A673 (cell line): ENCODE measurements at regions of chr12 and their contacts with region 1.

Region 1: DNA sequence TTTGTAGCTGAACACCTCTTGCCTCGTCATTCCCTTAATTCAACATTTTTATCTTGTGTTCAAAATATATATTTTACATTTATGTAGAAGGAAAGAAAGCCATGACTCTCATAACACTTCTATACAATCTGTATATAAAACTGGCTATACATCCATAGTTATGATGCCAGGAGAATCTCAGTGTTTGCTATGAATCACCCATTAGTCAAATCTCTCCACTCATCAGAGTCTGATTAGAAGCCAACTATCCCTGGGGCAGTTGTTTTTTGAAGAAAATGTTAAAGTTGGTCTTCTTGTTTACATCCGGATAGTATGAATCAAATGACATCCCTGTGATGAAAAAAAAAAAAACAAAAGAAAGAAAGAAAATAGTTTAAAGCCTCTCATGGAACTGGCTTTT is 503.9 kb downstream of the NELL2 start:
- DNase-seq: no peak
- H3K4me3 ChIP-seq: no peak overlapping the region
- H3K27ac ChIP-seq: no peak overlapping the region
- H3K4me1 ChIP-seq: peaks cover 4% of the 10 kb centered on the region
- H3K27me3 ChIP-seq: no peaks in the 10 kb centered on the region
- CTCF ChIP-seq: no peak

Region 2: DNA sequence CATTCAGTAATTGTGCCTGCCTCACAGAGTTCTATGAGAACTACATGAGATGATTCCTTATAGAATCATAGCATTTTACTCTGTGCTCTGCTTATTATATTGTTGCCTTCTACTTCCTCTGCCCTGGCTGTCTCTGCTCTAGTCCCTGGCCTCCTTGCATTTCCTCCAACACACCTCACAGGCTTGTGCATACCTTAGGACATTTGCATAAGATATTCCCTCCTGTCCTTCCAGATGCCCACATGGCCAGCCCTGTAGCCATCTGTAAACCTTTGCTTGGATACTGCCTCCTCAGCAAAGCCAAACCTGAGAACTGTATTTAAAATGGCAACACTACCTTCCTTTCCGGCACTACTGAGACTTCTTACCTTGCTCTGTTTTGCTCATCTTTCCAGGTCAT is 50.3 kb after region 1 on chr12:
- CTCF ChIA-PET with region 1: no interaction called
- POLR2A ChIA-PET with region 1: no interaction called
- intact Hi-C with region 1: loop called (anchors 5 kb)
- DNase-seq: no peak
- H3K4me3 ChIP-seq: no peak overlapping the region
- H3K27ac ChIP-seq: no peak overlapping the region
- H3K4me1 ChIP-seq: no peaks in the 10 kb centered on the region
- H3K27me3 ChIP-seq: no peaks in the 10 kb centered on the region
- CTCF ChIP-seq: no peak

Region 3: DNA sequence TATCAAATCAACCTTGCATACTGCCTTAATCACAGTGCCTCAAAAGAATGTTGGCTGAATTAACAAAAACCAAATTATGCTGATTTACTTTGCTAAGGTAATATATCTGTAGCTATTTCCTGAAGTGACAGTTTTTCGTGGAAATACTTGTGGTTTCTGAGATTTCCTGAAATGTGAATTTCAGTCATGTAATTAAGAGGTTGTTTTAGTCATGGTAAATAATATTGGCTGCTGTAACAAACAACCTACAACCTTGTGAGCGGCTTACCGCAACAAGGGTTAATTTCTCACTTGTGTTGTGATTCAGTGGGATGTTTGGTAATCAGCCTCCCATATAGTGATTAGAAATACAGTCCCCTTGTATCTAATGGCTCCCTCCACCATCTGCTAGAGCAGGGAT is 115.9 kb after region 1 on chr12:
- CTCF ChIA-PET with region 1: no interaction called
- POLR2A ChIA-PET with region 1: no interaction called
- intact Hi-C with region 1: no loop called
- DNase-seq: peak; percentile 28
- H3K4me3 ChIP-seq: no peak overlapping the region
- H3K27ac ChIP-seq: no peak overlapping the region
- H3K4me1 ChIP-seq: no peaks in the 10 kb centered on the region
- H3K27me3 ChIP-seq: no peaks in the 10 kb centered on the region
- CTCF ChIP-seq: no peak